ENCODE measurements at regions of chr4 and their contacts with region 1.

Region 1: DNA sequence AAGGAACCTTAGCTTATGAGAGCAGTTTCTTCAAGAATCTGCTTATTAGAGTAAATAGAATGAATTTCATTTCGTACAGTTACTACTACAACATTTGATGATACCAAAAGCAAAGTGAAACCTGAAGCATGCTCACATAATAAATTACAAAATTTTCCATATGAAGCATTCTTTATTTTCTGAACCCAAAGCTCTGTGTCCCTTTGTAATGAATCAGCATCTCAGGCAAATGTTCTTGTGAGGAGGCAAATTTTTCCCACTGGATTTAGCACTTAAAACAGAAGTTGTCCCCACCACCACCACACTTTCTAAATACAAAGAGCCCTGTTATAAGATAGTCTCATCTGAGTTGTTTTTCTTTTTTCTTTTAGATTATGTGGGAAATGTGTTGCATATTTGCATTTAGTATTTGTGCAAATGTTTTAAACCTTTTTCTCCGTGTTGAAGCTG is 70.7 kb upstream of the NFKB1 start:
- DNase-seq: peak; percentile 54
- H3K4me3 Mint-ChIP-seq: peak overlapping the region; percentile 90
- H3K27ac Mint-ChIP-seq: peak overlapping the region; percentile 88
- H3K4me1 Mint-ChIP-seq: peaks cover 14% of the 10 kb centered on the region
- H3K27me3 Mint-ChIP-seq: peaks cover 8% of the 10 kb centered on the region

Region 2: DNA sequence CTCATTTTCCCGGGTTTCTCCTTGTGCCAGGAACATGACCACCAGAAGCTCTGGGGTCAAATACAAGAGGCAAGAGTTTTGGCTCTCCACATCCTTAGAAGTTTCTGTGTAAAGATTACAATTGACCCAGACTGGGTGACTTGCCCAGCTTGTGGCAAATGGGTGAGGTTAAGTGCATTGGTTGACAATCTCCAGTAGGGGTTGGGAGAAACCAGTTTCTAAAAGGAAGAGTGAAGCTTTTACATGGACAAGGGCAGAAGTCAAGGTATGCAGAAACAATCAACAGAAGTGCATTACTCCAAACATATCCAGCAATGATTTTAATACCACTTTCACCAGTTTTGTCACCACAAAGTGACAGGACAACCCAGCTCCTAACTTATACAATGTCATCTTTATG is 175.0 kb before region 1 on chr4:
- intact Hi-C with region 1: loop called (anchors 1 kb)
- DNase-seq: no peak
- H3K4me3 Mint-ChIP-seq: no peak overlapping the region
- H3K27ac Mint-ChIP-seq: no peak overlapping the region
- H3K4me1 Mint-ChIP-seq: no peaks in the 10 kb centered on the region
- H3K27me3 Mint-ChIP-seq: no peaks in the 10 kb centered on the region

Region 3: GRCh38 chr4:102411416-102411815 is 19.1 kb before region 1 on chr4:
- intact Hi-C with region 1: no loop called
- DNase-seq: peak; percentile 0
- H3K4me3 Mint-ChIP-seq: no peak overlapping the region
- H3K27ac Mint-ChIP-seq: no peak overlapping the region
- H3K4me1 Mint-ChIP-seq: no peaks in the 10 kb centered on the region
- H3K27me3 Mint-ChIP-seq: peaks cover 10% of the 10 kb centered on the region

Region 4: DNA sequence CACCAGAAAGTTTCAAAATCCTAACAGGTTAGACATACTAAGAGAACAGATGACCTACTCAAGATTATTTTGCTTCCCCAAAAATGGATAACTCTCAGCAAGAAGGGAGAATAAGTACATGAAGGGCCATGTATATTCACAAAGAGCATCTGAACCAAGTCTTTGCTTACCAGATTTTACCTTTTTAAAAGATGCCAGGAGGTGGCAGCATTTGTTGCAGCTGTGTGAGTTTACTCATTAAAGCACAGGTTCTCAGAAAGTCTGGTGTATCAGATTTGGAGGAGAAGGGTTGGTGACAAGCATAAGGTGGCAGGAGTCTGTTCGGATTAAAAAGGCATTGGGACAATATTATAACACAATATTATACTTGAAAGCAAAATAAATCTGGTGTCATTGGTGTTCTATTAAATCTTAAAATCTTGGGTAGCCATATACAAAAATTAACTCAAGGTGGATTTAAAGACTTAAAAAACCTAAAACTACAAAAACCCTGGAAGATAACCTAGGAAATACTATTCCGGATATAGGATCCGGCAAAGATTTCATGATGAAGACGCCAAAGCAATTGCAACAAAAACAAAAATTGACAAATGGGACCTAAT is 19.4 kb after region 1 on chr4:
- intact Hi-C with region 1: loop called (anchors 1 kb)
- DNase-seq: peak; percentile 89
- H3K4me3 Mint-ChIP-seq: no peak overlapping the region
- H3K27ac Mint-ChIP-seq: no peak overlapping the region
- H3K4me1 Mint-ChIP-seq: peaks cover 42% of the 10 kb centered on the region
- H3K27me3 Mint-ChIP-seq: no peaks in the 10 kb centered on the region

Region 5: DNA sequence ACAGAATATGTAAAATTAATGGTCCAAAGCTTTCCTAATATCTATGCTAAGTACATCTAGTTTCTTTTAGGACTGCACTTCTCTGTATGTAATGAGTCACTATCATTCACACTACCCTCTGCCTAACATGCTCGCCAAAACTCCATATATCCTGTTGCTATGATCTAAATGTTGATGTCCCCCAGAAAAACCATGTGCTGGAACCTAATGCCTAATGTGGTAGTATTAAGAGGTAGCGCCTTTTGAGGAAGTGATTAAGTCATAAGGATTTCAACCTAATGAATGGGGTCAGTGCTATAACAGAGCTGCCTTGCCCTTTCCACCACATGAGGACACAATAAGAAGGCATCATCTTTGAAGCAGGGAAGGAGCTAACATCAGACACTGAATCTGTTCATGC is 35.8 kb after region 1 on chr4:
- intact Hi-C with region 1: no loop called
- DNase-seq: no peak
- H3K4me3 Mint-ChIP-seq: no peak overlapping the region
- H3K27ac Mint-ChIP-seq: no peak overlapping the region
- H3K4me1 Mint-ChIP-seq: peaks cover 28% of the 10 kb centered on the region
- H3K27me3 Mint-ChIP-seq: no peaks in the 10 kb centered on the region

Region 6: DNA sequence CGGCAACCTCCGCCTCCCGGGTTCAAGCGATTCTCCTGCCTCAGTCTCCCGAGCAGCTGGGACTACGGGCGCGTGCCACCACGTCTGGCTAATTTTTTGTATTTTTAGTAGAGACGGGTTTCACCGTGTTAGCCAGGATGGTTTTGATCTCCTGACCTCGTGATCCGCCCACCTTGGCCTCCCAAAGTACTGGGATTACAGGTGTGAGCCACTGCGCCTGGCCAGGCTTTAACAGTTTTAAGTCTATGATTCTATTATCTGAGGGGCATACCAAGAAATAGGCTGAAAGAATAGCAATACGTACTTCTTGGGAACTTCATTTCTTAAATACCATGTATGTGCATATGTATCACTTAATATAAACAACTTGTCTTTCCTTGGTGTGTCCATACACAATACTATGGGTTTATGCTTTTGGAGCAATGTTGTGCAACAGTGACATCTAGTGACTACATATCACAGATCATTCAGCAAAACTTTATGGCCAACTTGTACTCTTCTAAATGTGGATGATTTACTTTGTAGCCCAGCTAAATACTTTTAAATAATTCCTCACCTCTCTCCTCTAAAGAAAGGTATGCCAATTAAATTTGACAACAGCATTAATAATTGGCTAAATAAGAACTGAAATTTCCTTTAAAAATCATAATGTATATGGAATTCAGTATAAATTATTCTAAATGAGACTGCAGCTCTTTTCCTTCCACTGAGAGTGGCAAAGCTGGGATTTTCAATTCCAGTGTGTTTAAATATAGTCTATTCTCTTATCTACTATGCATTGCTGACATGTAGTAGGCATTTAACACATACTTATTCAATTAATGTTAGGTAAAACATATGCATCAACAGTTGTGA is 578.6 kb after region 1 on chr4:
- intact Hi-C with region 1: loop called (anchors 1 kb)
- DNase-seq: peak; percentile 83
- H3K4me3 Mint-ChIP-seq: no peak overlapping the region
- H3K27ac Mint-ChIP-seq: no peak overlapping the region
- H3K4me1 Mint-ChIP-seq: no peaks in the 10 kb centered on the region
- H3K27me3 Mint-ChIP-seq: peaks cover 8% of the 10 kb centered on the region